GM18951 (cell line): ENCODE measurements at regions of chr15 and their contacts with region 1.

Region 1: DNA sequence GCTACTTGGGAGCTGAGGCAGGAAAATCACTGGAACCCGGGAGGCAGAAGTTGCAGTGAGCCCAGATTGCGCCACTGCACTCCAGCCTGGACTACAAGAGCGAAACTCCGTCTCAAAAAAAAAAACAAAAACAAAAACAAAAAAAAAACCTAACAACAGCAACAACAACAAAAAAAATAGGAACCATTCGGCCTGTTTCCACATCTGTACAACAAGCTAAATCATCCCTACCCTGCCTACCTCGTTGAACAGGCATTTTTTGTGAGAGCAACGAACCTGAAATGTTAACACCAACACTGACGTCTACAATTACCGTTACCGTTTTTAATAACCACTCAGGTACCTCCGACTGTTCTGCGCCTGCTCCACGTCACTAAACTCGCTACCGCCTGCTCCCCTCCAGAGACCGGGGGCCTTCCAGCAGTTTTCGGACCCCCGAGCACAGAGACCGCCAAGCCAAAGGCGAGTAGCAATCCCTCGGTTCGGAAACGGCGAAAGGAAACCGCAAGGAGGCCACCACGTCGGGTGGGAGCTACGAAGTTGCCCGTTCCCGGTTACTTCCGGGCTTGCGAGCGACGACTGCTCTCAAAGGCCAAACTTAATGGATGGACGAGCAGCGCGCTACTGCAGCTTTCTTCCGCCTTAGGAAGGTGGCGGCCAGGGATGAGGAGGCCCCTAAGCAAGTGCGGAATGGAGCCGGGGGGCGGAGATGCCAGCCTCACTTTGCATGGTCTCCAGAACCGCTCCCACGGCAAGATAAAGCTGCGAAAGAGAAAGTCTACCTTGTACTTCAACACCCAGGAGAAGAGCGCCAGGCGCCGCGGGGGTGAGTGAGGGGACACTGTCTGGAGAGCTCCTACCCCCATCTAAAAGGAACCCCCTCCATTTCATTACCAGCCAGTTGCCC is at the starts of genes PIGB and PIGBOS1:
- POLR2A ChIP-seq: peak; percentile 78

Region 2: GRCh38 chr15:55434989-55435825 is 116.4 kb after region 1 on chr15:
- in situ Hi-C with region 1: loop called (anchors 10 kb)
- POLR2A ChIP-seq: no peak